Naive thymus-derived CD4-positive, alpha-beta T cell (primary cell): ENCODE measurements at regions of chrX and their contacts with region 1.

Region 1: GRCh38 chrX:119943185-119943988 is at the start of gene NKAP:
- DNase-seq: peak; percentile 53 to 84 (median 79)
- ATAC-seq: peak; percentile 95
- H3K4me3 ChIP-seq: peak within 1 kb of the TSS; percentile 84
- H3K4me3 Mint-ChIP-seq: peak within 1 kb of the TSS; percentile 84 to 100 (median 97)
- H3K27ac ChIP-seq: peak within 1 kb of the TSS; percentile 97
- H3K27ac Mint-ChIP-seq: peak within 1 kb of the TSS; percentile 84 to 99 (median 94)
- H3K4me1 ChIP-seq: peaks cover 8 to 15% of the 10 kb centered on the region in 2 donors
- H3K4me1 Mint-ChIP-seq: peaks cover 13 to 30% (median 22%) of the 10 kb centered on the region in 7 donors
- H3K27me3 ChIP-seq: no peaks in the 10 kb centered on the region
- H3K27me3 Mint-ChIP-seq: peaks cover 0 to 2% (median 2%) of the 10 kb centered on the region in 5 donors
- total RNA-seq, gene NKAP: 9.7 to 19.3 (median 14.9) TPM

Region 2: DNA sequence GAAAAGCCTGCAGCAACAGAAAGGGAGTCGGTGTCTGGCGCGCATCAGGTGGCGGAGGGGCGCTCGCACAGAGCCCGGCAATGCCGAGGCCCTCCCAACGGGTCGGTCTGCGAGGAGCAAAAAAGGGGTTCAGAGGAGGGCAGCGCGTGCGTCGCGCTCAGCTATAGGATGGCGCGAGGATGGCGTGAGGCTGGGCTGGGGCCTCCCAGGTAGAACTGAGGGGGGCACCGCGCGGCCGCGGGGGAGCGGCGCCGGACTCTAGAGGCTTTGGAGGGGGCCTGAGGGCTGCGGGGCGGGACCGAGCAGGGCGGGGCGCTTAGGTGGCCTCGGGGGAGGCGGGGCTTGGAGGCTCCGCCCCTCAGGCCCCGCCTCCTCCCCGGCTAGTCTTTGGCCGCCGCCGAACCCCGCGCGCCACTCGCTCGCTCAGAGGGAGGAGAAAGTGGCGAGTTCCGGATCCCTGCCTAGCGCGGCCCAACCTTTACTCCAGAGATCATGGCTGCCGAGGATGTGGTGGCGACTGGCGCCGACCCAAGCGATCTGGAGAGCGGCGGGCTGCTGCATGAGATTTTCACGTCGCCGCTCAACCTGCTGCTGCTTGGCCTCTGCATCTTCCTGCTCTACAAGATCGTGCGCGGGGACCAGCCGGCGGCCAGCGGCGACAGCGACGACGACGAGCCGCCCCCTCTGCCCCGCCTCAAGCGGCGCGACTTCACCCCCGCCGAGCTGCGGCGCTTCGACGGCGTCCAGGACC is 707.3 kb before region 1 on chrX and contains the start of gene PGRMC1:
- CTCF ChIA-PET with region 1: no interaction called
- POLR2A ChIA-PET with region 1: no interaction called
- intact Hi-C with region 1: loop called in 1 of 2 experiments (anchors 10 kb)
- DNase-seq: peak; percentile 60 to 84 (median 79)
- ATAC-seq: peak; percentile 98
- H3K4me3 ChIP-seq: peak within 1 kb of the TSS; percentile 68
- H3K4me3 Mint-ChIP-seq: peak within 1 kb of the TSS; percentile 83 to 93 (median 90)
- H3K27ac ChIP-seq: peak within 1 kb of the TSS; percentile 74
- H3K27ac Mint-ChIP-seq: peak within 1 kb of the TSS; percentile 49 to 88 (median 79)
- H3K4me1 ChIP-seq: peaks cover 8 to 11% of the 10 kb centered on the region in 2 donors
- H3K4me1 Mint-ChIP-seq: peaks cover 13 to 36% (median 31%) of the 10 kb centered on the region in 7 donors
- H3K27me3 ChIP-seq: no peaks in the 10 kb centered on the region
- H3K27me3 Mint-ChIP-seq: peaks cover 0 to 29% (median 0%) of the 10 kb centered on the region in 5 donors
- total RNA-seq, gene PGRMC1: 9.5 to 28.4 (median 11.9) TPM

Region 3: GRCh38 chrX:119574394-119575266 is 368.8 kb before region 1 on chrX and contains the start of gene UBE2A:
- CTCF ChIA-PET with region 1: no interaction called
- POLR2A ChIA-PET with region 1: no interaction called
- intact Hi-C with region 1: loop called in 1 of 2 experiments (anchors 1 kb)
- DNase-seq: peak; percentile 72 to 89 (median 85)
- ATAC-seq: peak; percentile 99
- H3K4me3 ChIP-seq: peak within 1 kb of the TSS; percentile 72
- H3K4me3 Mint-ChIP-seq: peak within 1 kb of the TSS; percentile 85 to 96 (median 92)
- H3K27ac ChIP-seq: peak within 1 kb of the TSS; percentile 88
- H3K27ac Mint-ChIP-seq: peak within 1 kb of the TSS; percentile 85 to 97 (median 90)
- H3K4me1 ChIP-seq: peaks cover 0 to 11% of the 10 kb centered on the region in 2 donors
- H3K4me1 Mint-ChIP-seq: peaks cover 7 to 35% (median 18%) of the 10 kb centered on the region in 7 donors
- H3K27me3 ChIP-seq: no peaks in the 10 kb centered on the region
- H3K27me3 Mint-ChIP-seq: no peaks in the 10 kb centered on the region
- total RNA-seq, gene UBE2A: 34.0 to 74.7 (median 60.2) TPM

Region 4: GRCh38 chrX:119852382-119853353 is 90.7 kb before region 1 on chrX and contains the start of gene UPF3B:
- CTCF ChIA-PET with region 1: no interaction called
- POLR2A ChIA-PET with region 1: no interaction called
- intact Hi-C with region 1: loop called in 1 of 2 experiments (anchors 5 kb)
- DNase-seq: peak; percentile 67 to 96 (median 92)
- ATAC-seq: peak; percentile 98
- H3K4me3 ChIP-seq: peak within 1 kb of the TSS; percentile 88
- H3K4me3 Mint-ChIP-seq: peak within 1 kb of the TSS; percentile 89 to 100 (median 98)
- H3K27ac ChIP-seq: peak within 1 kb of the TSS; percentile 95
- H3K27ac Mint-ChIP-seq: peak within 1 kb of the TSS; percentile 87 to 99 (median 97)
- H3K4me1 ChIP-seq: no peaks in the 10 kb centered on the region
- H3K4me1 Mint-ChIP-seq: peaks cover 3 to 29% (median 23%) of the 10 kb centered on the region in 7 donors
- H3K27me3 ChIP-seq: no peaks in the 10 kb centered on the region
- H3K27me3 Mint-ChIP-seq: peaks cover 0 to 3% (median 0%) of the 10 kb centered on the region in 5 donors
- total RNA-seq, gene UPF3B: 7.6 to 12.6 (median 11.3) TPM

Region 5: DNA sequence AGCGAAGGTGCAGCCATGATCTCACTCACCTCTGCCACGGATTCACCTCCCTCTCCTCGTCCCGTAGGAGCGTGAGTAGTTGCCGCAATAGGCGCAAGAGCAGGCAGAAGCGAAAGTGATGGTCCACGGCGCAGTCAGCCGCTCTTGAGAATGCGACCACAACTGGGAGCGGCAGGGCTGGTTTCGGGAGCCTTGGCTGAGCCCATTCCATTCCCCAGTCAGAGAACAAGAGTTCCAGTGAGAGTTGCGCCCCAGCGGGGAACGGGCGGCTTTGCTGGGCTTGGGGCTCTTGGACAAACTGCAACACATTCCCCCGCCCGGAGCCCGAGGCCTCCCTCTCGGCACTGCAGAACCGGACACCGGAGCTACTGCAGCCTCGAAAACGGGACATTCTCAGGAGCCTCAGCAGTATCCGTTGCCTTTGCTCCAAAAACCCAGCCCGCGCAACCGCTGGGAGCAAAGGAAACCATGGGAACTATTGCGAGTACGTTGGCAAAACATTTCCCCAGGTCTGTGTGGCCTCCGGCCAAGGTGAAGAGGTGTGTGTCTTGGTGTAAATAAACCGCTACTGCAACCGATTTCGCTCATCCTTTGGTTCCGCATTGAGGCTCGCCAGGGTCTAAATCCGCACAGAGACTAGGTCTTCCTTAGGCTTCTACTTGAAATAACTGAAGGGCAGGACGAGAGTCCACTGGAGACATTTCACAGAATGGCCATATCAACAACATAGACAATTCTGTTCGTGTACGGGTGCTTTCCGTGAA is 301.5 kb after region 1 on chrX:
- CTCF ChIA-PET with region 1: no interaction called
- POLR2A ChIA-PET with region 1: no interaction called
- intact Hi-C with region 1: loop called (anchors 2 kb)
- DNase-seq: peak; percentile 22 to 68 (median 52)
- ATAC-seq: peak; percentile 92
- H3K4me3 ChIP-seq: peak overlapping the region; percentile 73
- H3K4me3 Mint-ChIP-seq: peak overlapping the region; percentile 85 to 100 (median 96)
- H3K27ac ChIP-seq: peak overlapping the region; percentile 77
- H3K27ac Mint-ChIP-seq: peak overlapping the region; percentile 78 to 97 (median 90)
- H3K4me1 ChIP-seq: peaks cover 5 to 6% of the 10 kb centered on the region in 2 donors
- H3K4me1 Mint-ChIP-seq: peaks cover 12 to 32% (median 27%) of the 10 kb centered on the region in 7 donors
- H3K27me3 ChIP-seq: no peaks in the 10 kb centered on the region
- H3K27me3 Mint-ChIP-seq: peaks cover 0 to 4% (median 0%) of the 10 kb centered on the region in 5 donors

Region 6: GRCh38 chrX:120468825-120469525 is 525.6 kb after region 1 on chrX and contains the start of gene LAMP2:
- CTCF ChIA-PET with region 1: no interaction called
- POLR2A ChIA-PET with region 1: no interaction called
- intact Hi-C with region 1: loop called in 1 of 2 experiments (anchors 10 kb)
- DNase-seq: peak; percentile 58 to 78 (median 72)
- ATAC-seq: peak; percentile 99
- H3K4me3 ChIP-seq: peak within 1 kb of the TSS; percentile 79
- H3K4me3 Mint-ChIP-seq: peak within 1 kb of the TSS; percentile 89 to 99 (median 94)
- H3K27ac ChIP-seq: peak within 1 kb of the TSS; percentile 80
- H3K27ac Mint-ChIP-seq: peak within 1 kb of the TSS; percentile 76 to 94 (median 92)
- H3K4me1 ChIP-seq: peaks cover 0 to 7% of the 10 kb centered on the region in 2 donors
- H3K4me1 Mint-ChIP-seq: peaks cover 5 to 40% (median 29%) of the 10 kb centered on the region in 7 donors
- H3K27me3 ChIP-seq: no peaks in the 10 kb centered on the region
- H3K27me3 Mint-ChIP-seq: no peaks in the 10 kb centered on the region
- total RNA-seq, gene LAMP2: 22.5 to 60.3 (median 44.9) TPM